GM13977 (cell line): ENCODE measurements at regions of chr20 and their contacts with region 1.

Region 1: DNA sequence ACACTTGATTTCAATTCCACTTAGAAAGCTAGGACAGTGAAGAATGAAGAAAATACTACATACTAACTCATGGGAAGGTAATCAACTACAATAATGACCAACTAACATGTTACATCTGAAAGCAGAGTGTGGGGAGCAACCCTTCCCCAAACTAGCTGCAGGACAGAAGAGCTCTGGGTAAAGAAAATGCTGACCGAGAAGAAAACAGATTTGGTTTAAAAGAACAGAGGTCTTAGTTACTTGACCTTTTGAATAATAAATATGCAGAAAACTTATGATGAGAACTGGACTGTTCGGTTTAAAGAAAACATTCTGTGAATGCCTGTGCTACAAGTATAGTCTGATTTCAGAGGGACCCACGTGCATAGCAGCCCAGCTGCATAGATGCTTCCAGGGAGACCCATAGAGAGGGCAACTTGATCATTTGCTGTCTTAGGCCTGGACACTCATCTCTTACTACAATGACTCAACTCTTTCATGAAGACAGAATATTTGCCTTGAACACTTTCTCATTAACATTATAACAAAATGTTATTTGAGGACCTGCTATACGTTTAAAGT is 53.5 kb downstream of the RALGAPA2 start:
- DNase-seq: no peak
- CTCF ChIP-seq: no peak

Region 2: DNA sequence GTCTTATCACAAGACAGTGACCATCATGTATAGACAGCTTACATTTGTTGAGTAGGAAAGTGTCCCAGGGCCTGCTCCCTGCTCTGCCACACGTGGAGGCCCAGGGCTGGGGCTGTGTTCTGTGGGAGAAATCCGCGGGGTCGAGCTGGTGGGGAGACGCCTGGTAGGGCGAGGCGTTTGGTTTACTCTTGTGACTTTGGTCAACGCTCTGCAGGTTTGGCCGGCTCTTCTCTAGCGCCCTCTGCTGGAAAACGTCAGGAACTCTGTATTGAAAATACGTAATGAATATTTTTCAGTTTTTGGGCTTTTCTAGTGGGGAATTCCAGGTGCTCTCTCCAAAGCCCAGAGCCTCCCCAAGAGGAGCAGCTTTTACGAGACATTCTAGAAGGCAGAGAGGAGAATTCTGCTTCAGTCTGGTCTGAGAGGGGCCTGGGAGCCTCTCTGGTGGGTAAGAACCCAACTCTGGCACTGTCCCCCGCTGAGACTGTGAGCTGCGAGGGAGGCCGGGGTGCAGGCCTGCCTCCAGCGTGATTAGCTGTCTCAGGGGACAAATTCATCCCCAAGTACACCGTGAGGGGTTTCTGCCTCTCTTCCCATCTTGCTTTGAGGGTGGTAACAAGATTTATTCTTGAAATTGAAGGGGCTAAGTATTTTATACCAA is 166.1 kb after region 1 on chr20:
- in situ Hi-C with region 1: loop called (anchors 10 kb)
- DNase-seq: peak; percentile 84
- CTCF ChIP-seq: peak; percentile 67

Region 3: DNA sequence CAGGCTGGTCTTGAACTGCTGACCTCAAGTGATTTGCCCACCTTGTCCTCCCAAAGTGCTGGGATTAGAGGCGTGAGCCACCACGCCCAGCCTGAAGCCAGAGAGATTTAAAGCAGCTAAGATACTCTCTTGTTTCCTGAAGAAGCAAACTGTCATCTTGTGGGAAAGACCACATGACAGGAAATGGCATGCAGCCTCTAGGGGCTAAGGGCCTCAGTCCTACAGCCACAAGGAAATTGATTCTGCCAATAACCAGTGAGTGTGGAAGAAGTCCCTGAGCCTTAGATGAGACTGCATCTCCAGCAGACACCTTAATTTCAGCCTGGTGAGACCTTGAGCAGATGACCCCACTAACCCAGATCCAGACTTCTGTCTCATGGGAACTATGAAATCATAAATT is 507.9 kb after region 1 on chr20:
- in situ Hi-C with region 1: no loop called
- DNase-seq: no peak
- CTCF ChIP-seq: no peak